ENCODE measurements at regions of chr17 and their contacts with region 1.

Region 1: DNA sequence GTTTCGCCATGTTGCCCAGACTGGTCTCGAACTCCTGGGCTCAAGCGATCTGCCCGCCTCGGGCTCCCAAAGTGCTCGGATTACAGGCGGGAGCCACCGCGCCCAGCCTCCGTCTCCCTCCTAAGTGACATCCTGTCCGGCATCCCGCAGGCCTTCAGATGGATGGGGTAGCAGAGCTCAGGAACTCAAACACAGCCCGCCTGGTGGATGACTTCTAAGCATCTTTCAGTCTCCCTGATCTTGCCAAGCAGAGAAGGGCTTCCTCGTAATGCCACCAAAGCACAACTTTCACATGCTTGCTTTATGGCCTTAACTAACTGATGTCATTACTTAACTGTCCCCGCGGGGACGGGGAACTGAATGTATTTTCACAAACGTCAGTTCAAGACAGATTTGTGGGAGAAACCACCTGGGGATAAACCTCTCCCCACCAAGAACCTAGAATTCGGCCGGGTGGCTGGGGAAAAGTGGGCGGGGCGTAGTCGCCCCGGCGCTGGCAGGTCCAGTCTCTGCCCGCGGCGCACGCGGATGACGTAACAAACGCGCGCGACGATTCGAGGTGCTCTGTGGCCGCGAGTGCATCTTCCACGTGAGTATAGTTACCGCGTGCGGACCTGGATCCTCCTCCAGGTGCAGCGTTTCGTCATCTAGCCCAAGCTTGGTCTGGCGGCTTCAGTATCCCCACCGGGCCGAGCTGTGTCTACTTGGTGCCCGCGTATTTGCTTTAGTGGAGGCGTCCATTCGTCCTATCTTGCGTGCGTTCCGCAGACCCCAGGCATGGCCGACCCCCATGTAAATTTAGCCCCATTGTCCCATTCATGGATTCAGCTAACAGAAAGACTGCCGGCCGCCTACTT is at the start of gene PFAS:
- DNase-seq: peak; percentile 91 to 98 (median 94)
- ATAC-seq: peak; percentile 64
- H3K4me3 ChIP-seq: peak within 1 kb of the TSS; percentile 94
- H3K4me3 Mint-ChIP-seq: peak within 1 kb of the TSS; percentile 92 to 100 (median 99)
- H3K27ac ChIP-seq: peak within 1 kb of the TSS; percentile 100
- H3K27ac Mint-ChIP-seq: peak within 1 kb of the TSS; percentile 97 to 100 (median 100)
- H3K4me1 ChIP-seq: peaks cover 28 to 35% of the 10 kb centered on the region in 2 donors
- H3K4me1 Mint-ChIP-seq: peaks cover 30 to 56% (median 50%) of the 10 kb centered on the region in 7 donors
- H3K27me3 ChIP-seq: no peaks in the 10 kb centered on the region
- H3K27me3 Mint-ChIP-seq: no peaks in the 10 kb centered on the region
- total RNA-seq, gene PFAS: 31.6 to 68.9 (median 31.9) TPM

Region 2: GRCh38 chr17:8138672-8139371 is 110.2 kb before region 1 on chr17:
- CTCF ChIA-PET with region 1: no interaction called
- POLR2A ChIA-PET with region 1: interaction called, 26 read pairs
- intact Hi-C with region 1: loop called (anchors 1 to 5 kb)
- DNase-seq: peak; percentile 93 to 99 (median 98)
- ATAC-seq: peak; percentile 90
- H3K4me3 ChIP-seq: peak overlapping the region; percentile 76
- H3K4me3 Mint-ChIP-seq: no peak overlapping the region
- H3K27ac ChIP-seq: peak overlapping the region; percentile 84
- H3K27ac Mint-ChIP-seq: no peak overlapping the region
- H3K4me1 ChIP-seq: peaks cover 8 to 17% of the 10 kb centered on the region in 2 donors
- H3K4me1 Mint-ChIP-seq: peaks cover 0 to 5% (median 0%) of the 10 kb centered on the region in 7 donors
- H3K27me3 ChIP-seq: no peaks in the 10 kb centered on the region
- H3K27me3 Mint-ChIP-seq: peaks cover 0 to 11% (median 0%) of the 10 kb centered on the region in 5 donors

Region 3: DNA sequence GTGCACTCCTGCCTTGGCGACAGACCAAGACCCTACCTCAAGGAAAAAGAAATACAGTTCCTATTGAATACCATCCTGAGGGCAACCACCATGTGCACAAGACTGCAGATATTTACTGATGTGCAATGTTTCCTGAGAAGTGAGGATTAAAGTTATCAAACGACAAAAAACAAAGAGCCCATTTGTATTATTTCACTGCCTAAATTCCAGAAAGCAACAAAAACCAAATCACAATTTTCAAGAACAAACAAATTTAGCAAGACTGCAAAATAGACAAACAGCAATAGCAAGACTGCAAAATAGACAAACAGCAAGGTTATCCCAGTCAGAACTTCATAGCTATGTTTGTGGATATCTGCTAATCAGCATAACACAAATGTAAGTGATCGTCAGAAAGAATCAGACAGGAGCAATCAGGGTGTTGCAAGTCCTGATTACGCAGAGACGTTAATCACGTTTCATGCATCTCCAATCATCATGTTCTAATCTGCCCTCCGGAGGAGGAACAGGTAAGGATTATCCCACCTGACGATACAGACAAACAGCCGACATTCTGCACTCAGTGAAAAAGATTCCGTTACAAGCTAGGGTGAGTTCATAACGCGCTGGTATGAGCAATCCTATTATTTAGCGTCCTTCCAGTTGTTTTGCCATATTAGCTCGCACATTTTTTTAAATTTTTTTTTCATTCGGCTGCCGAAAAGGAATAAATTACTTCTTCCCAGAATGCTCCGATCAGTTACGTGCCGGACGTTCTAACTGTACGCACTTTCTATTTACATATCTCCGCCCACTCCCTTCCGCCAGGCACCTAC is 75.7 kb before region 1 on chr17:
- CTCF ChIA-PET with region 1: no interaction called
- POLR2A ChIA-PET with region 1: interaction called, 63 read pairs
- intact Hi-C with region 1: no loop called
- DNase-seq: peak; percentile 49 to 95 (median 91)
- ATAC-seq: peak; percentile 91
- H3K4me3 ChIP-seq: peak overlapping the region; percentile 57
- H3K4me3 Mint-ChIP-seq: peak overlapping the region; percentile 80 to 96 (median 90)
- H3K27ac ChIP-seq: peak overlapping the region; percentile 92
- H3K27ac Mint-ChIP-seq: peak overlapping the region; percentile 99 to 100 (median 100)
- H3K4me1 ChIP-seq: peaks cover 26 to 39% of the 10 kb centered on the region in 2 donors
- H3K4me1 Mint-ChIP-seq: peaks cover 33 to 60% (median 52%) of the 10 kb centered on the region in 7 donors
- H3K27me3 ChIP-seq: no peaks in the 10 kb centered on the region
- H3K27me3 Mint-ChIP-seq: no peaks in the 10 kb centered on the region

Region 4: GRCh38 chr17:8209909-8210760 is 38.8 kb before region 1 on chr17 and contains the start of gene AURKB:
- CTCF ChIA-PET with region 1: no interaction called
- POLR2A ChIA-PET with region 1: interaction called, 17 read pairs
- intact Hi-C with region 1: loop called in 1 of 2 experiments (anchors 5 kb)
- DNase-seq: peak; percentile 76 to 96 (median 90)
- ATAC-seq: peak; percentile 99
- H3K4me3 ChIP-seq: peak within 1 kb of the TSS; percentile 91
- H3K4me3 Mint-ChIP-seq: peak within 1 kb of the TSS; percentile 85 to 97 (median 93)
- H3K27ac ChIP-seq: peak within 1 kb of the TSS; percentile 81
- H3K27ac Mint-ChIP-seq: peak within 1 kb of the TSS; percentile 60 to 95 (median 86)
- H3K4me1 ChIP-seq: peaks cover 5 to 8% of the 10 kb centered on the region in 2 donors
- H3K4me1 Mint-ChIP-seq: peaks cover 14 to 35% (median 16%) of the 10 kb centered on the region in 7 donors
- H3K27me3 ChIP-seq: no peaks in the 10 kb centered on the region
- H3K27me3 Mint-ChIP-seq: no peaks in the 10 kb centered on the region
- total RNA-seq, gene AURKB: 1.1 to 97.7 (median 1.3) TPM

Region 5: DNA sequence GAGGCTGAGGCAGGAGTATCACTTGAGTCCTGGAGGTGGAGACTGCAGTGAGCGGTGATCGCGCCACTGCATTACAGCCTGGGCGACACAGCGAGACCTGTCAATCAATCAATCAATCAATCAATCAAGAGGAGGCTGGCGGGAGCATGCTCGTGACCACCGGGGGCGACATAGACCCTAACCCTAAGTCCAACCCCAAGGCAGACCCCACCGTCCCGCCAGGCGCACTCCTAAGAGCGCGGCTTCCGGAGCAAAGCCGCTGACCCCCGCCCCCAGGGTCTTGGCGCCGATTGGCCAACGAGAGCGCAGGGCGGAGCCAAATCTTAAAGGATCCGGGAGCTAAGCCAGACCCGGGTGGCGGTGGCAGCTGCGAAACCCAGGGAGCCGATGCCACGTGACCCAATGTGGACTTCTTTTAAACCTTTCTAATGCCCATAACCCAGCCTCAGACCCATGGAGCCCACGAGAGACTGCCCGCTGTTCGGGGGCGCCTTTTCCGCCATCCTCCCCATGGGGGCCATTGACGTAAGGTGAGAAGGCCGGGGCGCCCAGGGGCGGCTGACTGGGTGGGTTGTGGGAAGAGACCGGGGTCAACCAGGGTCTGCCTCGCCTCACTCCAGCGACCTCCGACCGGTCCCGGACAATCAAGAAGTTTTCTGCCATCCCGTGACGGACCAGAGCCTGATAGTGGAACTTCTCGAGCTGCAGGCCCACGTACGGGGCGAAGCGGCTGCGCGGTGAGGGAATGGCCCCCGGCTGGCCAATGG is 39.5 kb after region 1 on chr17 and contains the start of gene RANGRF:
- CTCF ChIA-PET with region 1: interaction called, 7 read pairs
- POLR2A ChIA-PET with region 1: interaction called, 121 read pairs
- intact Hi-C with region 1: loop called (anchors 1 kb)
- DNase-seq: peak; percentile 64 to 86 (median 74)
- ATAC-seq: peak; percentile 95
- H3K4me3 ChIP-seq: peak within 1 kb of the TSS; percentile 95
- H3K4me3 Mint-ChIP-seq: peak within 1 kb of the TSS; percentile 92 to 100 (median 97)
- H3K27ac ChIP-seq: peak within 1 kb of the TSS; percentile 96
- H3K27ac Mint-ChIP-seq: peak within 1 kb of the TSS; percentile 89 to 98 (median 96)
- H3K4me1 ChIP-seq: peaks cover 8 to 24% of the 10 kb centered on the region in 2 donors
- H3K4me1 Mint-ChIP-seq: peaks cover 27 to 46% (median 43%) of the 10 kb centered on the region in 7 donors
- H3K27me3 ChIP-seq: no peaks in the 10 kb centered on the region
- H3K27me3 Mint-ChIP-seq: no peaks in the 10 kb centered on the region
- total RNA-seq, gene RANGRF: 26.0 to 46.1 (median 38.9) TPM

Region 6: GRCh38 chr17:8376271-8377067 is 127.5 kb after region 1 on chr17 and contains the start of gene KRABD2:
- CTCF ChIA-PET with region 1: no interaction called
- POLR2A ChIA-PET with region 1: no interaction called
- intact Hi-C with region 1: loop called in 1 of 2 experiments (anchors 1 kb)
- DNase-seq: peak; percentile 77 to 92 (median 85)
- ATAC-seq: peak; percentile 100
- H3K4me3 ChIP-seq: peak within 1 kb of the TSS; percentile 87
- H3K4me3 Mint-ChIP-seq: peak within 1 kb of the TSS; percentile 82 to 96 (median 90)
- H3K27ac ChIP-seq: peak within 1 kb of the TSS; percentile 80
- H3K27ac Mint-ChIP-seq: peak within 1 kb of the TSS; percentile 62 to 94 (median 92)
- H3K4me1 ChIP-seq: peaks cover 28 to 31% of the 10 kb centered on the region in 2 donors
- H3K4me1 Mint-ChIP-seq: peaks cover 32 to 61% (median 46%) of the 10 kb centered on the region in 7 donors
- H3K27me3 ChIP-seq: no peaks in the 10 kb centered on the region
- H3K27me3 Mint-ChIP-seq: no peaks in the 10 kb centered on the region

Region 7: GRCh38 chr17:8421571-8421970 is 172.6 kb after region 1 on chr17:
- CTCF ChIA-PET with region 1: no interaction called
- POLR2A ChIA-PET with region 1: no interaction called
- intact Hi-C with region 1: no loop called
- DNase-seq: no peak
- ATAC-seq: no peak
- H3K4me3 ChIP-seq: no peak overlapping the region
- H3K4me3 Mint-ChIP-seq: no peak overlapping the region
- H3K27ac ChIP-seq: no peak overlapping the region
- H3K27ac Mint-ChIP-seq: no peak overlapping the region
- H3K4me1 ChIP-seq: no peaks in the 10 kb centered on the region
- H3K4me1 Mint-ChIP-seq: peaks cover 0 to 4% (median 0%) of the 10 kb centered on the region in 7 donors
- H3K27me3 ChIP-seq: no peaks in the 10 kb centered on the region
- H3K27me3 Mint-ChIP-seq: peaks cover 11 to 60% (median 44%) of the 10 kb centered on the region in 5 donors